MCF 10A (cell line): ENCODE measurements at regions of chr2 and their contacts with region 1.

Region 1: GRCh38 chr2:16617282-16618261 is 48.1 kb downstream of the CYRIA start:
- DNase-seq: peak; percentile 51
- H3K4me3 Mint-ChIP-seq: no peak overlapping the region
- H3K27ac Mint-ChIP-seq: no peak overlapping the region
- H3K4me1 Mint-ChIP-seq: no peaks in the 10 kb centered on the region
- H3K27me3 Mint-ChIP-seq: peaks cover 14% of the 10 kb centered on the region
- CTCF ChIP-seq: peak; percentile 56

Region 2: GRCh38 chr2:16664052-16664731 is 46.6 kb after region 1 on chr2:
- CTCF ChIA-PET with region 1: no interaction called
- POLR2A ChIA-PET with region 1: interaction called, 3 read pairs
- intact Hi-C with region 1: loop called (anchors 5 kb)
- DNase-seq: no peak
- H3K4me3 Mint-ChIP-seq: peak overlapping the region; percentile 67
- H3K27ac Mint-ChIP-seq: no peak overlapping the region
- H3K4me1 Mint-ChIP-seq: no peaks in the 10 kb centered on the region
- H3K27me3 Mint-ChIP-seq: peaks cover 13% of the 10 kb centered on the region
- CTCF ChIP-seq: no peak

Region 3: GRCh38 chr2:16727256-16727655 is 109.7 kb after region 1 on chr2:
- CTCF ChIA-PET with region 1: interaction called, 6 read pairs
- POLR2A ChIA-PET with region 1: no interaction called
- intact Hi-C with region 1: loop called (anchors 1 kb)
- DNase-seq: no peak
- H3K4me3 Mint-ChIP-seq: no peak overlapping the region
- H3K27ac Mint-ChIP-seq: no peak overlapping the region
- H3K4me1 Mint-ChIP-seq: peaks cover 5% of the 10 kb centered on the region
- H3K27me3 Mint-ChIP-seq: peaks cover 32% of the 10 kb centered on the region
- CTCF ChIP-seq: no peak